ENCODE measurements at regions of chr3 and their contacts with region 1.

Region 1: DNA sequence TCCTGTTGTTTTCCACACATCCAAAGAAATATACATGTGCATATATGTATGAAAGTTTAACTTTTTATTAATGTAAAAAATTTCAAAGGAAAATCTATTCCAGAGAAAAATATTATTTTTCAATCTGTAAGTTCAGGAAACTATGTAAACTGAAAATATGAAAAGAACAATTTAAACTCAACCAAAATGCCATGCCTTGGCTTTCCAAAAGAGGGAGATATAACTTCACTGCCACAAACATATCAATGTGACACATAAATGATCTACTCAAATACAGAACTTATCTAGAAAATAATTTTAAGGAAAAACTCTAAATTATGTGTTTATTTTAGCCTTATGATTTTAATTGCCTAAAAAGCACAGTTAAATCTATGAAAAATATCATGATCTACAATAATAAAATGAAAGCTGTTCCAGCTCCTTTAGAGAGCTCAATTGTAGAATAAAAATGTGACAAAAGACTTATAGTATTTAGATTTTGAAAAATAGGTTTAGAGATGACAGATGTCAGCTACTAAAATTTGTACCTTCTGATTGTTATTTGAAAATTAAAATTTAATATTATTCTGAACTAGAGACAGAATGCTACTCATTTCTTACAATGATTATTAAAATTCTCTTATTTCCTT is 94.8 kb downstream of the GBE1 start:
- DNase-seq: no peak
- H3K4me3 ChIP-seq: no peak overlapping the region
- H3K27ac ChIP-seq: no peak overlapping the region
- H3K4me1 ChIP-seq: peaks cover 0 to 8% of the 10 kb centered on the region in 2 donors
- H3K27me3 ChIP-seq: no peaks in the 10 kb centered on the region
- CTCF ChIP-seq: peak; percentile 34 to 83 (median 76)

Region 2: DNA sequence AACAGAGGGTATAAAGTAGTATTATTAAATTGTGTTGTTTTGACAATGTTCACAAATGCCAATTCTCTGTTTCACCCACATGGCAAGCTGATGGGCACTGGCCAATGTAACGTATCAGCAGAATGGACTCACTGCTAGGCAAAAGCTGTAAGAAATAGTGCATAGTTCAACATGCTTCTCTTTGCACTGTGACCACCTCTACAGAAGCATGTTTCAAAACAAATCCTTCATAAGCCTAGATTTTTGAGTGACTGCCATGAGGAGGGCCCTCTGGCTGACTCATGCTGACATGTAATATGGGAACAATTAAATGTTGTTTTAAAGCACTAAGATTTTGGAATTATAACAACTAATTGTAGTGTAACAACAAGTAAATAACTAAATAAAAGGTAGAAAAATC is 91.7 kb after region 1 on chr3:
- intact Hi-C with region 1: no loop called
- DNase-seq: peak in 1 of 2 donors; percentile 77
- H3K4me3 ChIP-seq: peak overlapping the region in 1 of 2 donors; percentile 19
- H3K27ac ChIP-seq: peak overlapping the region; percentile 99
- H3K4me1 ChIP-seq: peaks cover 3 to 29% of the 10 kb centered on the region in 2 donors
- H3K27me3 ChIP-seq: no peaks in the 10 kb centered on the region
- CTCF ChIP-seq: no peak

Region 3: DNA sequence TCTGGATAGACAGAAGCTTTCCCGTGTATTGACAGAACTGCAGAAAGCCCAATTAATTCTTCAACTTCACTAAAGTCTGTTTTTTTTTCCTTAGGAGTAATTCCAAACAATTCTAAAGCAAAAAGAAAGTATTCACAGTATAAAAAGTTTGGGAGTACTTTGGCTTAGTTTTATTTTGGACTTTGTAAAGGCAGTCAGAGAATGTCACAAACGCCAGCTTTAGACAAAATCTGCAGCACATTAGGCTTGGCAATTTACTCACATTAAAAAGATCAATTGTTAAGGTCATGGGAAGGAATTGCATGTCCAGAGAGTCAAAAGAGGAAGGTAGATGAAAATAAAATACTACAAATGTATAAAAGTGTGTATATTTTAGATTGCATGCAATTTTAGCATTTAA is 142.3 kb after region 1 on chr3:
- intact Hi-C with region 1: no loop called
- DNase-seq: no peak
- H3K4me3 ChIP-seq: no peak overlapping the region
- H3K27ac ChIP-seq: no peak overlapping the region
- H3K4me1 ChIP-seq: peaks cover 0 to 3% of the 10 kb centered on the region in 2 donors
- H3K27me3 ChIP-seq: no peaks in the 10 kb centered on the region
- CTCF ChIP-seq: no peak

Region 4: DNA sequence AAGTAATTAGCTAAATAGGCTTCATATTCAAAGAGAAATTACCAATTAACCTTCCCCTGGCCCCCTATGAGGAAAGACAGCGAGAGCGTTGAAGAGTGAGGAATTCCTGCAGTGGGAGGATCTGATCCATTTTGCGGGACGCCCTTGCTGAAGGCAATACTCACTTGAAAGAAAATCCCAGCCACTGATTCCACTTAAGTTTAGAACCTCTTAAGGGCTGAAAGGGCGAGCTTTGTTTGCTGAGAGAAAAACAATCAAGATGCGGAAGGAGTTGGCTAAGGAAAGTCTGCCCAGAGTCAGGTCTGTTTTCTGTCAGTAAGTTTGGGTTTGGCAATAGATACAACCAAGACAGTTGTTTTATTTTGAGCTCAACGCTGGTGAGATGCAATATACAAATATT is 197.7 kb after region 1 on chr3:
- intact Hi-C with region 1: loop called (anchors 10 kb)
- DNase-seq: no peak
- H3K4me3 ChIP-seq: no peak overlapping the region
- H3K27ac ChIP-seq: no peak overlapping the region
- H3K4me1 ChIP-seq: no peaks in the 10 kb centered on the region
- H3K27me3 ChIP-seq: no peaks in the 10 kb centered on the region
- CTCF ChIP-seq: no peak

Region 5: DNA sequence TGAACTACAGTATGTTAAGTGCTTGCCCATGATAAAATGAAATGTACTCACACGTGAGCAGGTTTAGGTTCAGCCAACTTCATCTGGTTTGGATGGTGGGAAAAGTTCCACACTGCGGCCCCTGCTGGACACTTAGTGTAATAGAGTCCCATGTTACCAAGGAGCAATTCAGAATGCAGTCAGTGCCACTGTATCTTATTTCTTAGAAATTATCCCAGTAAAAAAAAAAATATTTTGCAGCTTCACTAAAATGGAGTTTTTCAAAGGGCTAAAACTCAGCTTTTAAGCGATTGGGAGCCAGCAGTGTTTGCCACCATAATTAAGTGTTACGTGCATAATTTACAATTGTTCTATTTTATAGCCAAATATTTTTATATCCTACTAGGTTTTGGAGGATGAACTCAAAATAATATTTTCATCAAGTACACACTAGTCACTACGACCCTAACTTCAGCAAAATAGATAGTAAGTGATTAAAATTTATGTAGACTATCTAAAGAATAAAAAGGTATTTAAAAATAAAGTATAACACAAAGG is 466.5 kb after region 1 on chr3:
- intact Hi-C with region 1: loop called (anchors 5 kb)
- DNase-seq: peak in 1 of 2 donors; percentile 67
- H3K4me3 ChIP-seq: no peak overlapping the region
- H3K27ac ChIP-seq: no peak overlapping the region
- H3K4me1 ChIP-seq: no peaks in the 10 kb centered on the region
- H3K27me3 ChIP-seq: no peaks in the 10 kb centered on the region
- CTCF ChIP-seq: peak; percentile 64 to 76 (median 66)

Region 6: DNA sequence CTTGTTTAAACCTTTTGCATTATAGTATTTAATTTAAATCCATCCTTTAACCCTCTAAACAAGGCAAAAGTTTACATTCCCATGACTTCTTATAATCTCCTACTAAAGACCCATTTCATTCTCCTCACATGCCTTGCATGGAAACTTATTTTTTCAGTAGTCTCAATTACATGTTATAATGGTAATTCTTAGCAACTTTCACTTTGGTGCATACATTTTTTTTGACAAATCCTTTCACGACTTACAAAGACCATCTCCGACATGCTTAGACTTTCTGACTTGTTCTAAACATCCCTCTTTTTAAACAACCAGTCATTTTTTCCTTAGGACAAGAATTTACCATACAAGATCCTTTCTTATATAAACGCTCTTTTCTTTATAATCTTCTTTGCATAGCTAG is 710.3 kb after region 1 on chr3:
- intact Hi-C with region 1: no loop called
- DNase-seq: no peak
- H3K4me3 ChIP-seq: no peak overlapping the region
- H3K27ac ChIP-seq: no peak overlapping the region
- H3K4me1 ChIP-seq: no peaks in the 10 kb centered on the region
- H3K27me3 ChIP-seq: no peaks in the 10 kb centered on the region
- CTCF ChIP-seq: no peak